ENCODE measurements at regions of chr7 and their contacts with region 1.

Region 1: GRCh38 chr7:140983802-140984201 is 30.9 kb downstream of the MRPS33 start:
- DNase-seq: no peak
- H3K4me3 Mint-ChIP-seq: no peak overlapping the region
- H3K27ac Mint-ChIP-seq: no peak overlapping the region
- H3K4me1 Mint-ChIP-seq: no peaks in the 10 kb centered on the region
- H3K27me3 Mint-ChIP-seq: peaks cover 12% of the 10 kb centered on the region

Region 2: DNA sequence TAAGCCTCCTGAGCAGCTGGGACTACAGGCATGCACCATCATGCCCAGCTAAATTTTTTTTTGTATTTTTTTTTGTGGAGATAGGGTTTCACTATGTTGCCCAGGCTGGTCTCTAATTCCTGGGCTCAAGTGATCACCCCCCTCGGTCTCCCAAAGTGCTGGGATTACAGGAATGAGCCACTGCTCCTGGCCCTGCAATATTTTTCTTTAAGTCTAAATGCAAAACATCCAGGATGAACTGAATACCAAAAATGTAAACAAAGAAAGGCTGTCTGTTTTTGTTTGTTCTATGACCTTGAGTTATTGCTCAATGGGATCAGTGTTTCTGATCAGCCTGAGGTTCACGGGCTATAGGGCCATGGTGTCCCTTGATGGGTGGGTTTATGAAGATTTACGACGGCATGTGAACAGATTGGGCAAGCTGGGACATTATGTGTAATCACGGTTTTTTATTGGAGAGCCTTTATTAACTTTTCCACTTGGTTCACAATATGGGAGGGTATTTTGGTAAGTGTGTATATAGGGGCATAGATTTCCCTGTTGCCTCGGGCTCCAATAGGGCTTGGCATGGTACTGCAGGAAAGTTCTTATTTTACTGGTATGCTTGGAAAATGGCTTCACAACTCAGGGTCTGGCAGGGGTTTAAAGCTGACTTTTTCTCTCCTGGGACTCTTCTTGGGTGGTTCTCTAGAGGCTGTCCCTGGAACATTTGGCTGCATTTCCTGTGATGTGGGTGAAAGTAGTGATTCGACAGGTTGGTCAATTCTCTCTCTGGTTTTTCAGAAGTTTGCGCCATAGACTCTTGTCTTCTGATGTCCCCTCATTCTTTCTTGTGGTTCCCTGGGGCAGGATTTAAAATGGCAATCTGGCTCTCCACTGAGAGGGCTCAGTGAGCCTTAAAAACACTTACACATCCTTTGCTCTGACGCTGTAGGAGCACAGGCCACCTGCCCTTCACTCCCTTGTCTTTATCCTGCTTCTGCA is 10.6 kb before region 1 on chr7:
- CTCF ChIA-PET with region 1: interaction called, 19 read pairs
- POLR2A ChIA-PET with region 1: no interaction called
- intact Hi-C with region 1: no loop called
- DNase-seq: no peak
- H3K4me3 Mint-ChIP-seq: no peak overlapping the region
- H3K27ac Mint-ChIP-seq: no peak overlapping the region
- H3K4me1 Mint-ChIP-seq: no peaks in the 10 kb centered on the region
- H3K27me3 Mint-ChIP-seq: peaks cover 2% of the 10 kb centered on the region

Region 3: GRCh38 chr7:141466151-141466904 is 482.5 kb after region 1 on chr7:
- CTCF ChIA-PET with region 1: no interaction called
- POLR2A ChIA-PET with region 1: no interaction called
- intact Hi-C with region 1: no loop called
- DNase-seq: no peak
- H3K4me3 Mint-ChIP-seq: no peak overlapping the region
- H3K27ac Mint-ChIP-seq: no peak overlapping the region
- H3K4me1 Mint-ChIP-seq: no peaks in the 10 kb centered on the region
- H3K27me3 Mint-ChIP-seq: peaks cover 11% of the 10 kb centered on the region

Measured in activated CD4-positive, alpha-beta memory T cell treated with anti-CD3 and anti-CD28 coated beads for 36 hours (primary cell).